Activated T-helper 1 cell treated with anti-CD3 and anti-CD28 coated beads, Interleukin-12 subunit alpha, Interleukin-12 subunit beta, Interleukin-2, Interleukin-4 antibody, amounts not matched to agents 30 ng/mL and 10 ng/mL and 1 ng/mL, durations not matched to agents 14 hours and 24 hours and 36 hours (primary cell): ENCODE measurements at regions of chr11 and their contacts with region 1.

Region 1: DNA sequence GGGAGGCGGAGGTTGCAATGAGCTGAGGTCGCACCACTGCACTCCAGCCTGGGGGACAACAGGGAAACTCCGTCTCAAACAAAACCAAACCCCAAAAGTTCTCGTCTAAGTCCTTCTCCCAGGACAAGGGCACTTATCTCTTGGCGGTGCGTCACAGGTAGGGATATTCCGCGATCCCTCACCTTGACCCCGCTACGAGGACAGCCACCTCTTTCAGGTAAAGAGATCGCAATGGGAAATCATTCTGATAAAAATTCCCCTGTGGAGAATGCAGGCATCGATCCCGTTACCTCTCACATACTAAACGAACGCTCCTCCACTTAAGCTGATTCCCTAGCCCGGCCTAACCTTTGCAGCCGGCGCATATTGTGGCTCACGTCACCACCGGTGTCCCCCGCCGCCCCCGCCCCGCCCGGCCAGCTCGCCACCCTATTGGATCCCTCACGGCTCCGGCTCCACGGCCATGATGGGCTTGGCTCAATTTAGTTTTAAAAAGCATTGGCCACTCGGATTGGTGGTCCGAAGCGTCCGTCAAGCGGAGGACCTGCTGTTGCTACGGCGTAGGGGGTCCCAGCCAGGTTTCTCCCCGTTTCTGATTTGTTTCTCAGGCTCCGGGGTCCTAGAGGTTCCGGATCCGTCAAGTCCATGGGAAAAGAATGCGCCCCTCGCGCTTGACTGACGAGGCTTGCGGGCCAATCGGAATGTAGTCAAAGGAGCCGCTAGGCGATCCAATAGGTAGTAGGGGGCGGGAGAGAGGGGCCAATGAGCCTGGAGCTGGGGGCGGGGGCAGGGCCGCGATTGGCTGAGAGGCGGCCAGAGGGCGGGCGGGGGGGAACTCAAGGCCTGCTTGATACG is 439 bp upstream of the PPP6R3 start:
- DNase-seq: peak; percentile 90
- H3K4me3 Mint-ChIP-seq: peak overlapping the region; percentile 86
- H3K27ac Mint-ChIP-seq: peak overlapping the region; percentile 91
- H3K4me1 Mint-ChIP-seq: peaks cover 29% of the 10 kb centered on the region
- H3K27me3 Mint-ChIP-seq: peaks cover 3% of the 10 kb centered on the region

Region 2: GRCh38 chr11:68066742-68067141 is 393.4 kb before region 1 on chr11:
- intact Hi-C with region 1: no loop called
- DNase-seq: no peak
- H3K4me3 Mint-ChIP-seq: no peak overlapping the region
- H3K27ac Mint-ChIP-seq: no peak overlapping the region
- H3K4me1 Mint-ChIP-seq: no peaks in the 10 kb centered on the region
- H3K27me3 Mint-ChIP-seq: no peaks in the 10 kb centered on the region

Region 3: DNA sequence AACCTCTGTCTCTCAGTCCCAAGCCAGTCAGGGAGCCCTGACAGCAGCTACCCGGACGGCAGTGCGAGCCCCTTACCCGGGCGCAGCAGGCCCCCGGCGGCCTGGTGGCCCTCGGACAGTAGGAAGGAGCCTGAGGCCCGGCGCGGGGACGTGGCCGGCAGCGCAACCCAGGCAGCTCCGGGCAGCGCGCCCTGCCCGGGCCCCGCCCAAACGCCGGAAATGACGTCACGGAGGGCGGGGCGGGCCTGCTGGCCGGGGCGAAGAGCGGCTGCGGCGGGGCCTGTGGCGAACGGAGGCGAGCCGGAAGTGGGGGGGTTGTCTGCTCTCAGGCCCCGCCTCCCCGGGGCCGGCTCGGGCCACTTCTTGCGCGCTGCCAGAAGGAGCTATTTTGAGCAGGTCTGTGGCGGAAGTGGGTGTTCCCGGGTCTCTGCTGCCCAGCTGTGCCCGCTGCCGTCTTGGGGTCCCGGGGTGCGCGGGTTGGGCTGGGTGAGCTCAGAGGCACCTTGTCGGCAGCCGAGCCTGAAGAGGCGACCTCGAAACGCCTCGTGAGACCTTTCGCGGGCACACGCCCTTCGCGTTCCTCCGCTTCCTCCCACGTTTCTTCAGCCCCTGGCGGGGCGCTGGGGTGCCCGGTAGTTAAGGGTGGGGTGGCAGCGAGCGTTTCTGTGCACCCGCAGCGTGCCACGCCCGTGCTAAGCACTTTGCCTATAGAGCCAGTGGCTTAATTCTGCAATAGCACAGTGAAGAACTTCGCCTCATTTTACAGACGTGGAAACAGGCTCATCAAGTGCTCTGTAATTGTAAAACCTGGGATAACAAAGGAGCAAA is 188.1 kb before region 1 on chr11 and contains the start of gene C11orf24:
- intact Hi-C with region 1: loop called (anchors 5 kb)
- DNase-seq: peak; percentile 93
- H3K4me3 Mint-ChIP-seq: peak within 1 kb of the TSS; percentile 96
- H3K27ac Mint-ChIP-seq: peak within 1 kb of the TSS; percentile 93
- H3K4me1 Mint-ChIP-seq: peaks cover 23% of the 10 kb centered on the region
- H3K27me3 Mint-ChIP-seq: no peaks in the 10 kb centered on the region
- total RNA-seq, gene C11orf24: 33.9 and 39.7 TPM in 2 replicates

Region 4: GRCh38 chr11:68447015-68447801 is 12.9 kb before region 1 on chr11:
- intact Hi-C with region 1: loop called (anchors 1 kb)
- DNase-seq: peak; percentile 64
- H3K4me3 Mint-ChIP-seq: no peak overlapping the region
- H3K27ac Mint-ChIP-seq: no peak overlapping the region
- H3K4me1 Mint-ChIP-seq: peaks cover 9% of the 10 kb centered on the region
- H3K27me3 Mint-ChIP-seq: no peaks in the 10 kb centered on the region

Region 5: GRCh38 chr11:68546555-68546954 is 86.4 kb after region 1 on chr11:
- intact Hi-C with region 1: loop called (anchors 2 kb)
- DNase-seq: no peak
- H3K4me3 Mint-ChIP-seq: no peak overlapping the region
- H3K27ac Mint-ChIP-seq: peak overlapping the region; percentile 53
- H3K4me1 Mint-ChIP-seq: peaks cover 69% of the 10 kb centered on the region
- H3K27me3 Mint-ChIP-seq: no peaks in the 10 kb centered on the region

Region 6: GRCh38 chr11:68839054-68839865 is 379.1 kb after region 1 on chr11:
- intact Hi-C with region 1: loop called (anchors 5 kb)
- DNase-seq: peak; percentile 85
- H3K4me3 Mint-ChIP-seq: peak overlapping the region; percentile 70
- H3K27ac Mint-ChIP-seq: peak overlapping the region; percentile 73
- H3K4me1 Mint-ChIP-seq: peaks cover 50% of the 10 kb centered on the region
- H3K27me3 Mint-ChIP-seq: peaks cover 2% of the 10 kb centered on the region

Region 7: GRCh38 chr11:69670158-69670845 is 1210.2 kb after region 1 on chr11:
- intact Hi-C with region 1: loop called (anchors 10 kb)
- DNase-seq: peak; percentile 14
- H3K4me3 Mint-ChIP-seq: no peak overlapping the region
- H3K27ac Mint-ChIP-seq: no peak overlapping the region
- H3K4me1 Mint-ChIP-seq: peaks cover 24% of the 10 kb centered on the region
- H3K27me3 Mint-ChIP-seq: no peaks in the 10 kb centered on the region